ENCODE measurements at regions of chr6 and their contacts with region 1.

Region 1: GRCh38 chr6:123715006-123715875 is 78.5 kb upstream of the TRDN start:
- DNase-seq: no peak
- H3K4me3 Mint-ChIP-seq: no peak overlapping the region
- H3K27ac Mint-ChIP-seq: no peak overlapping the region
- H3K4me1 Mint-ChIP-seq: no peaks in the 10 kb centered on the region
- H3K27me3 Mint-ChIP-seq: no peaks in the 10 kb centered on the region

Region 2: GRCh38 chr6:123415844-123416468 is 299.3 kb before region 1 on chr6:
- intact Hi-C with region 1: loop called (anchors 2 kb)
- DNase-seq: peak; percentile 77
- H3K4me3 Mint-ChIP-seq: no peak overlapping the region
- H3K27ac Mint-ChIP-seq: no peak overlapping the region
- H3K4me1 Mint-ChIP-seq: no peaks in the 10 kb centered on the region
- H3K27me3 Mint-ChIP-seq: no peaks in the 10 kb centered on the region

Region 3: GRCh38 chr6:124441450-124441849 is 726.2 kb after region 1 on chr6:
- intact Hi-C with region 1: no loop called
- DNase-seq: no peak
- H3K4me3 Mint-ChIP-seq: no peak overlapping the region
- H3K27ac Mint-ChIP-seq: no peak overlapping the region
- H3K4me1 Mint-ChIP-seq: no peaks in the 10 kb centered on the region
- H3K27me3 Mint-ChIP-seq: no peaks in the 10 kb centered on the region

Region 4: DNA sequence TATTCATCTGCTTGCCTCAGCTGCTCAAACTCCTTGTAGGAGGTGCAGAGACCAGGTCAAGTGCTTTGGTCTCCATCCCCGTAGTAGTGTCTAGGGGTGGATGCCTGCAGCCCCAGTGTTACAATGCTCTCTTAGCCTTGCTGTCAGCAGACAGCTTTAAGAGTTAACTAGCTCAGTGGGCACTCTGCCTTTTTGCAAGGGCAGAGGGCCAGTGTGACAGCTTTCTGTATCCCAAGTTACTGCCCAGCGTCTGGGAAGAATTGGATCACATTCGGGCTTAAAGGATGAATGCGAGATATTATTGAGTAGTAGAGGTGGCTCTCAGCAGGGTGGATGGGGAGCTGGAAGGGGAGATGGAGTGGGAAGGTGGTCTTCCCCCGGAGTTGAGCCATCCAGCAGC is 907.1 kb after region 1 on chr6:
- intact Hi-C with region 1: no loop called
- DNase-seq: no peak
- H3K4me3 Mint-ChIP-seq: no peak overlapping the region
- H3K27ac Mint-ChIP-seq: no peak overlapping the region
- H3K4me1 Mint-ChIP-seq: no peaks in the 10 kb centered on the region
- H3K27me3 Mint-ChIP-seq: no peaks in the 10 kb centered on the region